ENCODE measurements at regions of chr5 and their contacts with region 1.

Region 1: DNA sequence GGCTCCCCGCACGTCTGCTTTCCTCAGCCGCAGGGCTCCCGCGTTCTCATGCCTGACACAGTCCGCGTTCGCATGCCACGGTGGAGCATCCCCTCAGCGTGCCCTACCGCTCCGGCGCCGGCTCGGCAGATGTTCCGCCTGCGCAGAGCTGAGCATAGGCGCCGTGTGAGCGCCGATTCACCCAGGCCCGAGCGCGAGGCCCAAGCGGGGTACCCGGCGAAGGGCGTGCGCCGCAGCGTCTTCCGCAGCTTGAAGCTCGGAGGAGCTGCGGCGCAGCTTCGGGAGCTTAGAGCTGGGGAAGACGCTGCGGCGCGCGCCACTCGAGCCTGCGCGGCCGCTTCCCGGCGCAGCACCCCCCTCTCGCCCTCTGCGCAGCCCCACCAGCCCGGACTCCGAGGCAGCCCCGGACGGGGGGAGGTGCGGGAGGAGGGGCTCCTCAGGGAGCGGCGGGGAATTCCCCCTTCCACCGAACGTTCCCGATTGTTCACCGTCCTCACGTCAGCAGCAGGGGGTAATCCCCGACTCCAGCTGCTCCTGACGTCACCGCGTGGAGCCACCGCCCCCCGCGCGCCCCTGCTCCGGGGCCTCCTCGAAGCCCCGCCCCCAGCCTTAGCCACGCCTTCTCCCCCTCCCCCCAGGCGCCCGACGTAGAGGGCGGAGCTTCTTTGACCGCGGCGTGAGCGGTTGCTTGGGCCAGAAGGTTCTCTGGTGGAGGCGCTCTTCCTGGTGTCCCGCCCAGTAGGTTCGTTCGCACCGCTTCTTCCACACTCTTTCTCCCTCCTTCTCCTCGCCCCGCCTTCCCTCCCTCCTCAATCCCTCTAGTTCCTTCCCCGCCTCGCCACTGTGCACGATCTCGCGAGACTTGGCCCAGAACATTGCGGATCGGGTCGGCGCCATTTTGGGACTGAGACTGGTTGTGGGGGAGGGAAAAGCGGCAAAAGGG is at the start of gene GPBP1:
- DNase-seq: peak; percentile 98
- ATAC-seq: peak; percentile 73
- H3K4me3 Mint-ChIP-seq: peak within 1 kb of the TSS; percentile 95
- H3K27ac Mint-ChIP-seq: peak within 1 kb of the TSS; percentile 97
- H3K4me1 Mint-ChIP-seq: peaks cover 40% of the 10 kb centered on the region
- H3K27me3 Mint-ChIP-seq: no peaks in the 10 kb centered on the region
- CTCF ChIP-seq: no peak
- total RNA-seq, gene GPBP1: 130 and 142 TPM in 2 replicates

Region 2: GRCh38 chr5:55534436-55535198 is 1638.8 kb before region 1 on chr5 and contains the start of gene PLPP1:
- CTCF ChIA-PET with region 1: no interaction called
- POLR2A ChIA-PET with region 1: no interaction called
- intact Hi-C with region 1: loop called (anchors 10 kb)
- DNase-seq: peak; percentile 89
- ATAC-seq: peak; percentile 79
- H3K4me3 Mint-ChIP-seq: peak within 1 kb of the TSS; percentile 90
- H3K27ac Mint-ChIP-seq: peak within 1 kb of the TSS; percentile 87
- H3K4me1 Mint-ChIP-seq: peaks cover 25% of the 10 kb centered on the region
- H3K27me3 Mint-ChIP-seq: no peaks in the 10 kb centered on the region
- CTCF ChIP-seq: no peak
- total RNA-seq, gene PLPP1: 10.3 and 12.0 TPM in 2 replicates

Region 3: GRCh38 chr5:56670118-56670483 is 503.4 kb before region 1 on chr5:
- CTCF ChIA-PET with region 1: no interaction called
- POLR2A ChIA-PET with region 1: interaction called, 6 read pairs
- intact Hi-C with region 1: loop called (anchors 1 kb)
- DNase-seq: peak; percentile 51
- ATAC-seq: peak; percentile 91
- H3K4me3 Mint-ChIP-seq: peak overlapping the region; percentile 69
- H3K27ac Mint-ChIP-seq: peak overlapping the region; percentile 93
- H3K4me1 Mint-ChIP-seq: peaks cover 83% of the 10 kb centered on the region
- H3K27me3 Mint-ChIP-seq: no peaks in the 10 kb centered on the region
- CTCF ChIP-seq: no peak

Region 4: GRCh38 chr5:56909294-56910209 is 263.9 kb before region 1 on chr5 and contains the start of gene SETD9:
- CTCF ChIA-PET with region 1: interaction called, 3 read pairs
- POLR2A ChIA-PET with region 1: interaction called, 43 read pairs
- intact Hi-C with region 1: loop called (anchors 1 kb)
- DNase-seq: peak; percentile 93
- ATAC-seq: peak; percentile 85
- H3K4me3 Mint-ChIP-seq: peak within 1 kb of the TSS; percentile 96
- H3K27ac Mint-ChIP-seq: peak within 1 kb of the TSS; percentile 96
- H3K4me1 Mint-ChIP-seq: peaks cover 20% of the 10 kb centered on the region
- H3K27me3 Mint-ChIP-seq: no peaks in the 10 kb centered on the region
- CTCF ChIP-seq: no peak
- total RNA-seq, gene SETD9: 3.4 and 6.2 TPM in 2 replicates

Region 5: GRCh38 chr5:57137401-57137800 is 36.1 kb before region 1 on chr5:
- CTCF ChIA-PET with region 1: interaction called, 7 read pairs
- POLR2A ChIA-PET with region 1: interaction called, 3 read pairs
- intact Hi-C with region 1: loop called (anchors 1 kb)
- DNase-seq: no peak
- ATAC-seq: no peak
- H3K4me3 Mint-ChIP-seq: no peak overlapping the region
- H3K27ac Mint-ChIP-seq: no peak overlapping the region
- H3K4me1 Mint-ChIP-seq: no peaks in the 10 kb centered on the region
- H3K27me3 Mint-ChIP-seq: peaks cover 14% of the 10 kb centered on the region
- CTCF ChIP-seq: no peak

Region 6: DNA sequence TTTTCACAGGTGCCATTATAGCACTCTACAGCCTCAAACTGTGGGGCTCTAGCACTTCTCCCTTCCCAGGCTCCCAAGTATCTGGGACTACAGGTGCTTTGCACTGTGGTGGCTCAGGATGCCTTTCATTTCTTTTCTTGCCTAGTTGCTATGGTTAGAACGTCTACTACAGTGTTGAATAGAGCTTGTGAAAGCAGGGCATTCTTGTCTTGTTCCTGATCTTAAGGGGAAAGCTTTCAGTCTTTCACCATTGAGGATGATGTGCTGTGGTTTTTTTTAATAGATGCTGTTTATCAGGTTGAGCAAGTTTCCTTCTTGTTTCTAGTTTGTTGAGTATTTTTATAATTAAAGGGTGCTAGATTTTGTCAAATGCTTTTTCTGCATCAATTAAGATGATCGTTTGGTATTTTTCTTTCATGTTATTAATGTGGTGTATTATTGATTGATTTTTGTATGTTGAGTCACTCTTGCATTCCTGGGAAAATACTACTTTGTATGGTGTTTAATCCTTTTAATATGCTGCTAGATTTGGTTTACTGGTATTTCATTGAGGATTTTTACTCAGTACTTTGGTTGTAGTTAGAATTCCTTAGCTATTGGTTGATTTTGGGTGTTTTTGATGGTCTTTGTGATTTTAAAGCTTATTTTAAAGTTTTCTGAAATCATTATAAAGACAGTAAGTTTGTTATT is 36.0 kb after region 1 on chr5:
- CTCF ChIA-PET with region 1: no interaction called
- POLR2A ChIA-PET with region 1: interaction called, 4 read pairs
- intact Hi-C with region 1: loop called (anchors 5 kb)
- DNase-seq: no peak
- ATAC-seq: no peak
- H3K4me3 Mint-ChIP-seq: no peak overlapping the region
- H3K27ac Mint-ChIP-seq: peak overlapping the region; percentile 25
- H3K4me1 Mint-ChIP-seq: peaks cover 66% of the 10 kb centered on the region
- H3K27me3 Mint-ChIP-seq: no peaks in the 10 kb centered on the region
- CTCF ChIP-seq: no peak

Region 7: GRCh38 chr5:58491216-58491892 is 1317.9 kb after region 1 on chr5 and contains the start of gene GAPT:
- CTCF ChIA-PET with region 1: no interaction called
- POLR2A ChIA-PET with region 1: no interaction called
- intact Hi-C with region 1: loop called (anchors 1 kb)
- DNase-seq: no peak
- ATAC-seq: peak; percentile 87
- H3K4me3 Mint-ChIP-seq: peak within 1 kb of the TSS; percentile 82
- H3K27ac Mint-ChIP-seq: peak within 1 kb of the TSS; percentile 95
- H3K4me1 Mint-ChIP-seq: peaks cover 66% of the 10 kb centered on the region
- H3K27me3 Mint-ChIP-seq: no peaks in the 10 kb centered on the region
- CTCF ChIP-seq: no peak
- total RNA-seq, gene GAPT: 39.8 and 40.3 TPM in 2 replicates